ENCODE measurements at regions of chr2 and their contacts with region 1.

Region 1: DNA sequence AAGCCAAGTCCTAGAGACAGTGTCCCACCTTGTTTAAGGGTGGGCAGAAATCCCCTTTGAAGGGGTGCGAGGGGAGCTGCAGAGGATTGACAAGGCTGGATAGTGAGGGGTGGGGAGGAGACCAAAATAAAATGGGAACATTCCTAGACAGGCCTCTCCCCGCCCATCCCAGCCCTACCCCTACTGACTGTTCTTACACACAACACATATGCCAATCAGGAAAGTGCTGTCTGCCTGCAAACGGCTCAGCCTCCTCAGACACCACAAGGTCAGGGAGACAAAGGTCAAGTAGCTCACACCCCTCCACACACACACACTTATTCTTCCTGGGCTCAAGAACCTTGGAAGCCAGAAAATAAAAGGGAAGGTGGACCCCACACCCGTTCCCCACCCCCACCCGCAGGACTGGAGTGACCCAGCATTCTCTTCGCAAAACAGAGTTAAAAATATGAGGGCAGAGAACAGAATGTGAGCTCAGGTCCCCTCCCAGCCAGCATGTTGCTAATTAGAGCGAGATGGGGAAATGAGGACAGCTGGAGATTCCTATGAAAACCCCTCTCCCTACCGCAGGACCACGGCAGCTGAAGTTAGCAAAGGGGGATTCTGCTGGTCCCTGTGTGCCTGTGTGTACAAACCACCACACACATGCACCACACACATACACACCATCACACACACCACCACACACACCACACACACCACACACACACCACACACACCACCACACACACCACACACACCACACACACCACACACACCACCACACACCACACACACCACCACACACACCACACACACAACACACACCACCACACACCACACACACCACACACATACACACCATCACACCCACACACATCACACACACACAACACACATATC is 197.8 kb downstream of the TNS1 start:
- DNase-seq: peak in 4 of 5 donors; percentile 18 to 33 (median 24)
- ATAC-seq: peak; percentile 24 to 45 (median 40)
- H3K4me3 ChIP-seq: no peak overlapping the region
- H3K27ac ChIP-seq: peak overlapping the region in 9 of 12 donors; percentile 29 to 82 (median 58)
- H3K4me1 ChIP-seq: peaks cover 6 to 84% (median 42%) of the 10 kb centered on the region in 12 donors
- H3K27me3 ChIP-seq: no peaks in the 10 kb centered on the region
- CTCF ChIP-seq: no peak
- POLR2A ChIP-seq: no peak

Region 2: DNA sequence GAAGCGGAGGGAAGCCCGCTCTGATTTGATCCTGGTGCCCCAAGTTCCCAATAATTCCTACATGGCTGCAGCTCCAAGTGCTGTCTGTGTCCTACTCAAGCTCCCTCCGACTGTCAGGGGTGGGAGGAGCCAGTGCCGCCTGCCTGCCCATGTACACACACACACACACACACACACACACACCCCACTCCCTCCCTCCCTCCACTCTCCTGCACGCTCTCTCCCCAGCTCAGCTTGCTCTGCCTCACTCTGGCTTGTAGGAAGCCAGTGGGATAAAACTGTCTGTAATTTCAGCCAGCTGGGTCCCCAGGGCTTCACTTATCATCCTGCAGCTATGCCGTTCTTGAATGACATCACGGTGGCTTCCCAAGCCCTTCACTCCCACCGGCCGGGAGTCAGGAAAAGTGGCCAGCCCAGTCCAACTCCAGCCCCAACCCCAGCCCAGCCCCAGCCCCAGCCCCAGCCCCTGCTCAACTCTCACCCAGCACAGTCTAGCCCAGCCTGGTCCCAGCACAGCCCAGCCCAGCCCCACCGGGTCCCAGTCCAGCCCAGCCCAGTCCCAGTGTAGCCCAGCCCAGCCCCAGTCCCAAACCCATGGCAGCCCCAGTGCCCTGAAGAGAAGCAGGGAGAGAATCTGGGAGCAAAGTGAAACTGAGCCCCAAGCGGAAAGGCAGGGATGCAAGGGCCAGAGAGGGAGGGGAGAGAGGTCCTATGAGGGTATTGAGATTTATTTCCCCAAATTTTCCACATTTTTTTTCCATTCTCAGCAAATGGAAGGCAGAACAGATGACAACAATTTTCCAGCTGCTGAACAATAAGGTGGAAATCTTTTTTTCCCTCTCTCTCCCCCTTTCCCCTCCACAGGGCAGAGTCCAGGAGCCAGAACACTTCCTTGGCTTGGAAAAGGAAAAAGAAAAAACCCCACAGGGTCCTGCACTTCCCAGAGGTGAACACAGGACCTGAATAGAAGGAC is 53.8 kb after region 1 on chr2:
- intact Hi-C with region 1: loop called in 2 of 10 experiments (anchors 10 kb)
- DNase-seq: peak; percentile 88 to 94 (median 91)
- ATAC-seq: peak; percentile 82 to 84 (median 82)
- H3K4me3 ChIP-seq: peak overlapping the region in 11 of 12 donors; percentile 19 to 72 (median 55)
- H3K27ac ChIP-seq: peak overlapping the region; percentile 74 to 99 (median 90)
- H3K4me1 ChIP-seq: peaks cover 9 to 95% (median 74%) of the 10 kb centered on the region in 12 donors
- H3K27me3 ChIP-seq: no peaks in the 10 kb centered on the region
- CTCF ChIP-seq: no peak
- POLR2A ChIP-seq: peak in 1 of 2 donors; percentile 35

Region 3: DNA sequence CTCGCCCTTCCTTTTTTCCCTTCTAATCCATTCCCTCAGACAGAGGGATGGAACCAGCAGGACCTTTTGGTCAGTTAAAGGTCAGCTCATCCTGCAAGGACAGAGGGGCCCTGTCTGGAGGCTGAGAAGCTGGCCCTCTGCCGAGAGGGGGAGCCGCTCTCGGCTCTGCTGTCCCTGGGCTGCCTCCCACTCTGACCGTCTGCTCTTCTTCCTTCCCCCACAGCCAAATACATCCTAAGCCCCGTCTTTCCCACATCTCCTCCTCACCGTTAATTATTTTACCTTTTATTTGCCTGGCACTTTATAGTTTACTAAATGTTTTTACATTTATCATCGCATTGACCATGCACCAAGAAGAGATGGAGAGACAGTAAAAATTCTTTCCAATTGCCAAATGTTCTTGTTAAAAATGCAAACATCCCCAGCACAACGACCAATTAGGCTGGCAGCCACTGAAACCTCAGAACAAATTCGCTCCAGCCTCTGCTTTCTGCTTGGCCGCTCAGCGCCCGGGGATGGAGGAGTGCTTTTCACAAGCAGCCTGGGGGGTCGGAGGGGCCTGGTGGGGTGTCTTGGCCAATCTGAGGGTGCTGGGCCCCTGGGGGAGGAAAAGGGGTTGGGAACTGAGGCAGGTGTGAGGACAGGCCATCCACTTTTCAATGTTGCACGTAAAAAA is 74.0 kb after region 1 on chr2:
- intact Hi-C with region 1: loop called in 1 of 10 experiments (anchors 5 kb)
- DNase-seq: no peak
- ATAC-seq: peak in 1 of 4 donors; percentile 21
- H3K4me3 ChIP-seq: no peak overlapping the region
- H3K27ac ChIP-seq: peak overlapping the region in 9 of 12 donors; percentile 14 to 74 (median 48)
- H3K4me1 ChIP-seq: peaks cover 0 to 80% (median 34%) of the 10 kb centered on the region in 12 donors
- H3K27me3 ChIP-seq: no peaks in the 10 kb centered on the region
- CTCF ChIP-seq: no peak
- POLR2A ChIP-seq: no peak

Region 4: DNA sequence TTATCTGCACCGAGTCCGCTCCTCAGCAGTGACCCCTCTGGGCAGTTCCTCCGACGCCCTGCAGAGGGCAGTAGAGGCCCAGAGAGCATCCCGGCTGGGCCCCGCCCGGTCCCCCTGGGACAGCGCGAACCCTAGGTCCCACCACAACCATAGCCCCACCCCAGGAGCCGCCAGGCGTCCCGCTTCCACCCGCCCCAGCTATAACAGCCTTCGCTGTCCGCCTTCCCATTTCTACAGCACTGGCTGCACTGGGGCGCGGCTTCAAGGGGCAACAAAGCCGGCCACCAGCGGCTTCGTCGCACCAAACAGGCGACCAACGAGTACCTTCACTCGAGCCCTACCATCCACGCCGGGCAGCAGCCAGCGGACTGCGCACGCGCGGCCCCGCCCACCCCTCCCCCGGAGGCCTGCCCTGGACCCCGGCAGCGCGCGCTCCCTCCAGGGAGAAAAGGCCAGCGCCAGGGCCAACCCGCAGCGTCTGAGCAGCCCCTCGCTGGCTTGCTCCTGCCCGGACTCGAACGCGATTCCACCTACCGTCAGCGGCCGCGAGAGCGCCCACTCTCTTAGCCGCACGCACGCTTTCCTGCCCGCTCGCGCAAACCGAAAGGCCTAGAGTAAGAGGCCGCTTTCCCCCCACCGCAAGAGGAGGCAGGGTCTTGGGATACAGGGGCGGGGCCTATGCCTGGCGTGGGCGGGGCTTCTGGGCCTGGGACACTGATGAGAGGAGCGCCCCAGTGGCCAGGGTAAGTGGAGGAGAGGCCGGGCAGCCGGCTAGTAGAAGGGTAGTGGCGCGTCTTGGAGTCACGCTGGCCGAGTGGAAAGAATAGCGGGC is 1355.4 kb after region 1 on chr2 and contains the start of gene NHEJ1:
- intact Hi-C with region 1: no loop called
- DNase-seq: peak; percentile 95 to 98 (median 96)
- ATAC-seq: peak; percentile 96 to 98 (median 98)
- H3K4me3 ChIP-seq: peak within 1 kb of the TSS; percentile 42 to 88 (median 68)
- H3K27ac ChIP-seq: peak within 1 kb of the TSS; percentile 88 to 99 (median 95)
- H3K4me1 ChIP-seq: peaks cover 0 to 15% (median 10%) of the 10 kb centered on the region in 12 donors
- H3K27me3 ChIP-seq: no peaks in the 10 kb centered on the region
- CTCF ChIP-seq: peak; percentile 98 to 100 (median 99)
- POLR2A ChIP-seq: peak in 1 of 2 donors; percentile 64
- total RNA-seq, gene NHEJ1: 4.6 to 13.2 (median 8.0) TPM

Measured in heart left ventricle (tissue), 16 donors.